ENCODE measurements at regions of chr16 and their contacts with region 1.

Region 1: GRCh38 chr16:28491970-28492474 is at the start of gene CLN3:
- DNase-seq: peak; percentile 97
- total RNA-seq, gene CLN3: 15.7 to 22.8 TPM

Region 2: GRCh38 chr16:28549390-28549789 is 57.4 kb after region 1 on chr16:
- intact Hi-C with region 1: loop called in 1 of 2 experiments (anchors 10 kb)
- DNase-seq: no peak